IMR-90 (cell line): ENCODE measurements at regions of chr16 and their contacts with region 1.

Region 1: GRCh38 chr16:17963185-17963836 is 373.2 kb downstream of the NPIPA8 start:
- DNase-seq: no peak
- ATAC-seq: no peak
- H3K4me3 ChIP-seq: no peak overlapping the region
- H3K27ac ChIP-seq: no peak overlapping the region
- H3K4me1 ChIP-seq: no peaks in the 10 kb centered on the region
- H3K27me3 ChIP-seq: no peaks in the 10 kb centered on the region
- CTCF ChIP-seq: no peak
- POLR2A ChIP-seq: no peak
- RAD21 ChIP-seq: no peak

Region 2: GRCh38 chr16:17759451-17760390 is 203.6 kb before region 1 on chr16:
- CTCF ChIA-PET with region 1: no interaction called
- POLR2A ChIA-PET with region 1: no interaction called
- dilution Hi-C with region 1: no loop called
- in situ Hi-C with region 1: no loop called
- intact Hi-C with region 1: no loop called
- DNase-seq: no peak
- ATAC-seq: no peak
- H3K4me3 ChIP-seq: no peak overlapping the region
- H3K27ac ChIP-seq: no peak overlapping the region
- H3K4me1 ChIP-seq: no peaks in the 10 kb centered on the region
- H3K27me3 ChIP-seq: no peaks in the 10 kb centered on the region; the same call in 1 of the 2 replicates
- CTCF ChIP-seq: no peak
- POLR2A ChIP-seq: no peak
- RAD21 ChIP-seq: no peak

Region 3: DNA sequence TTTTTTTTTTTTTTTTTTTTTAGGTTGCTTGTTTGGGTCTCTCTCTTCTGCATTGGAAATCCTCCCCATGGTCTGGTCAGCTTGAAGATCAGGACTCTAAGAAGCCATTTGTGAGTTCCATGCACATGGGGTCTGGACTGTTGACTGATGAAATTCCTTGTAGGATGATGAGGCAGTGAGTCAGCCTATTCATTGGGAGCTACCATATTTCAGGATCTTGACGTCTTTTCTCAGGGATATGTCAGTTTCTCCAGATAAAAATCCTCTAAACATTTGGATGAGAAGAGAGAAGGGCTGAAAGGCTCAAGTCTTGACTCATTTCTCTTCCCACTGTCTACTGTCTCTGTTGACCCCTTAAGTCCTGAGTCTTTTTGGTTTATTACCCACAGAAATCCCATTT is 159.7 kb before region 1 on chr16:
- CTCF ChIA-PET with region 1: no interaction called
- POLR2A ChIA-PET with region 1: no interaction called
- dilution Hi-C with region 1: no loop called
- in situ Hi-C with region 1: no loop called
- intact Hi-C with region 1: no loop called
- DNase-seq: peak; percentile 97
- ATAC-seq: peak; percentile 85
- H3K4me3 ChIP-seq: no peak overlapping the region
- H3K27ac ChIP-seq: peak overlapping the region; percentile 52; the same call in 1 of the 2 replicates
- H3K4me1 ChIP-seq: peaks cover 7% of the 10 kb centered on the region
- H3K27me3 ChIP-seq: no peaks in the 10 kb centered on the region
- CTCF ChIP-seq: no peak
- POLR2A ChIP-seq: no peak
- RAD21 ChIP-seq: no peak

Region 4: DNA sequence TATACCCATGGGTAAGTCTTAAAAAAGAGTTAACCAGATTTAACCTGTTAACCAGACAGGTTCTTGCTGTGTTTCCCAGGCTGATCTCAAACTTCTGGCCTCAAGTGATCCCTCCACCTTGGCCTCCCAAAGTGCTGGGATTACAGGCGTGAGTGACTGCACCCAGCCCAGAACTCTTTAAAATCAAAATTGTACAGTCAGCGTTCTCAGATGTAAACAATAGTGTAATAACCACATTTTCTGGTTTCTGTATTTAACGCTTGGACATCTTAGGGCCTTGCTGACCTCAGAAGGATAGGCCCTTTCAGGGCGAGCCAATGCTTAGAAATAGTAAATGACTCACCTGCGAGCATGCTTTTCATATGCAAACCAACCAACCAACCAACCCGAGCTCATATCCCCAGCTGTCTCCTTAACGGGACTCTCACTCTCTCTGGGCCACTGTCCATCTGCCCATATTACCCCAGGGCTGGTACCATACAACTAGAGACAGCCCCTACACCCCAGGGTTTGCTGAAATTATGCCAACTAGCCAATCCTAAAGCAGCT is 77.6 kb before region 1 on chr16:
- CTCF ChIA-PET with region 1: interaction called, 10 read pairs
- POLR2A ChIA-PET with region 1: no interaction called
- dilution Hi-C with region 1: no loop called
- in situ Hi-C with region 1: no loop called
- intact Hi-C with region 1: no loop called
- DNase-seq: no peak
- ATAC-seq: no peak
- H3K4me3 ChIP-seq: no peak overlapping the region
- H3K27ac ChIP-seq: no peak overlapping the region
- H3K4me1 ChIP-seq: no peaks in the 10 kb centered on the region
- H3K27me3 ChIP-seq: no peaks in the 10 kb centered on the region
- CTCF ChIP-seq: no peak
- POLR2A ChIP-seq: no peak
- RAD21 ChIP-seq: no peak

Region 5: GRCh38 chr16:17930280-17930679 is 33.0 kb before region 1 on chr16:
- CTCF ChIA-PET with region 1: no interaction called
- POLR2A ChIA-PET with region 1: no interaction called
- dilution Hi-C with region 1: no loop called
- in situ Hi-C with region 1: no loop called
- intact Hi-C with region 1: loop called (anchors 1 kb)
- DNase-seq: no peak
- ATAC-seq: no peak
- H3K4me3 ChIP-seq: no peak overlapping the region
- H3K27ac ChIP-seq: no peak overlapping the region
- H3K4me1 ChIP-seq: no peaks in the 10 kb centered on the region
- H3K27me3 ChIP-seq: no peaks in the 10 kb centered on the region
- CTCF ChIP-seq: no peak
- POLR2A ChIP-seq: no peak
- RAD21 ChIP-seq: no peak